Adrenal gland (tissue), 19 donors: ENCODE measurements at regions of chr12 and their contacts with region 1.

Region 1: GRCh38 chr12:132153501-132154340 is 9.5 kb downstream of the NOC4L start:
- DNase-seq: peak; percentile 52 to 82 (median 70)
- H3K4me3 ChIP-seq: no peak overlapping the region
- H3K27ac ChIP-seq: no peak overlapping the region
- H3K4me1 ChIP-seq: peaks cover 0 to 4% of the 10 kb centered on the region in 2 donors
- H3K27me3 ChIP-seq: no peaks in the 10 kb centered on the region
- CTCF ChIP-seq: peak; percentile 80 to 94 (median 88)
- POLR2A ChIP-seq: no peak

Region 2: DNA sequence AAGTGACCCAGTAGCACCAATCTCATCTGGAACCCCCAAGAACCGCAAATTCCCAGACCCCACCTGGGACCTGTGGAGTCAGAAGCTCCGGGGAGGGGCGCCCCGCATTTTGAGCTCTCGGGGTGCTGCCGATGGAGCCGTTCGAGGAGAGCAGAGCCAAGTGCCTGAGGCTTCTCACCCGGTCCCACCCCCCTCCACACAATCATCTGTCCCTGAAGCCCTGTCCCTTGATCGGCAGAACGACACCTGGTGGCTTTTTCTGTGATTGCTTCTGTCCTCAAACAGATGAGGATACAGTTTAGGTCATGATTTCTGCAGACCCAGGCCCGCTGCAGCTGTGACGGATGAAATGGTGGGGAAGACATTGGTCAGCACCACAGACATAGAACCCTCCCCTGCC is 65.2 kb after region 1 on chr12:
- intact Hi-C with region 1: loop called in 1 of 2 experiments (anchors 10 kb)
- DNase-seq: peak in 3 of 7 donors; percentile 33 to 63 (median 38)
- H3K4me3 ChIP-seq: no peak overlapping the region
- H3K27ac ChIP-seq: peak overlapping the region in 1 of 5 donors; percentile 34
- H3K4me1 ChIP-seq: no peaks in the 10 kb centered on the region
- H3K27me3 ChIP-seq: no peaks in the 10 kb centered on the region
- CTCF ChIP-seq: peak in 5 of 6 experiments; percentile 23 to 45 (median 32)
- POLR2A ChIP-seq: no peak

Region 3: GRCh38 chr12:132638541-132639418 is 485.1 kb after region 1 on chr12:
- intact Hi-C with region 1: no loop called
- DNase-seq: peak in 1 of 7 donors; percentile 32
- H3K4me3 ChIP-seq: no peak overlapping the region
- H3K27ac ChIP-seq: no peak overlapping the region
- H3K4me1 ChIP-seq: no peaks in the 10 kb centered on the region
- H3K27me3 ChIP-seq: no peaks in the 10 kb centered on the region
- CTCF ChIP-seq: peak; percentile 41 to 70 (median 55)
- POLR2A ChIP-seq: no peak